Activated CD4-positive, alpha-beta memory T cell treated with anti-CD3 and anti-CD28 coated beads for 36 hours (primary cell): ENCODE measurements at regions of chr7 and their contacts with region 1.

Region 1: GRCh38 chr7:8125680-8126444 is 136.1 kb downstream of the ICA1 start:
- DNase-seq: peak; percentile 89
- H3K4me3 Mint-ChIP-seq: peak overlapping the region; percentile 66
- H3K27ac Mint-ChIP-seq: peak overlapping the region; percentile 92
- H3K4me1 Mint-ChIP-seq: peaks cover 78% of the 10 kb centered on the region
- H3K27me3 Mint-ChIP-seq: no peaks in the 10 kb centered on the region

Region 2: DNA sequence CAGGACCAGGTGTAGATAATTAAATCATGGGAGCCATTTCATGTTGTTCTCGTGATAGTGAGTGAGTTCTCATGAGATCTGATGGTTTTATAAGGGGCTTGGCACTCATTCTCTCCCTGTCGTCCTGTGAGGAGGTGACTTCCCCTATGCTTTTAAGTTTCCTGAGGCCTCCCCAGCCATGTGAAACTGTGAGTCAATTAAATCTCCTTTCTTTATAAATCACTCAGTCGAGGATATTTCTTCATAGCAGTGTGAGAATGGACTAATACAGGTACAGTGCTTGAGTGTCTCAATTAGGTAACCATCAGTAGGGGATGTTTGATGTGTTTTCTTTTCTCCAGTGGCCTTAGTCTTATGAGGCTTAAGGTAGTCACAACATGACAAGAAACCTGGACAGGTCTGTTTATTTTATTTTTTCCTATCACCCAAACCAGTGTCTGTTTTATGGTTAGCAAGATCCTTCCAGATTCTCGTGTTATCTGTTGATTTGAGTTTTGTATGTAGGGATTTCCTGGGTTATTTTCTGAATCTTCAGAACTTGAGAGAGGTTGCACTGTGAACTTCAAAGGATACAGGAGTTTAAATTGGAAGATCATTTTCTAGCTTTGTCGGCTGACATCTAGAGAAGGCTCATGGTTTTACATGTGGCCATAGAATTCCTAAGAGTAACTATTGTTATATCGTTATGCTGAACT is 453.2 kb before region 1 on chr7:
- CTCF ChIA-PET with region 1: no interaction called
- POLR2A ChIA-PET with region 1: no interaction called
- intact Hi-C with region 1: loop called (anchors 5 kb)
- DNase-seq: peak; percentile 49
- H3K4me3 Mint-ChIP-seq: peak overlapping the region; percentile 11
- H3K27ac Mint-ChIP-seq: peak overlapping the region; percentile 67
- H3K4me1 Mint-ChIP-seq: peaks cover 39% of the 10 kb centered on the region
- H3K27me3 Mint-ChIP-seq: no peaks in the 10 kb centered on the region

Region 3: GRCh38 chr7:7772397-7772821 is 353.5 kb before region 1 on chr7:
- CTCF ChIA-PET with region 1: no interaction called
- POLR2A ChIA-PET with region 1: no interaction called
- intact Hi-C with region 1: loop called (anchors 2 kb)
- DNase-seq: peak; percentile 41
- H3K4me3 Mint-ChIP-seq: no peak overlapping the region
- H3K27ac Mint-ChIP-seq: no peak overlapping the region
- H3K4me1 Mint-ChIP-seq: peaks cover 19% of the 10 kb centered on the region
- H3K27me3 Mint-ChIP-seq: no peaks in the 10 kb centered on the region

Region 4: DNA sequence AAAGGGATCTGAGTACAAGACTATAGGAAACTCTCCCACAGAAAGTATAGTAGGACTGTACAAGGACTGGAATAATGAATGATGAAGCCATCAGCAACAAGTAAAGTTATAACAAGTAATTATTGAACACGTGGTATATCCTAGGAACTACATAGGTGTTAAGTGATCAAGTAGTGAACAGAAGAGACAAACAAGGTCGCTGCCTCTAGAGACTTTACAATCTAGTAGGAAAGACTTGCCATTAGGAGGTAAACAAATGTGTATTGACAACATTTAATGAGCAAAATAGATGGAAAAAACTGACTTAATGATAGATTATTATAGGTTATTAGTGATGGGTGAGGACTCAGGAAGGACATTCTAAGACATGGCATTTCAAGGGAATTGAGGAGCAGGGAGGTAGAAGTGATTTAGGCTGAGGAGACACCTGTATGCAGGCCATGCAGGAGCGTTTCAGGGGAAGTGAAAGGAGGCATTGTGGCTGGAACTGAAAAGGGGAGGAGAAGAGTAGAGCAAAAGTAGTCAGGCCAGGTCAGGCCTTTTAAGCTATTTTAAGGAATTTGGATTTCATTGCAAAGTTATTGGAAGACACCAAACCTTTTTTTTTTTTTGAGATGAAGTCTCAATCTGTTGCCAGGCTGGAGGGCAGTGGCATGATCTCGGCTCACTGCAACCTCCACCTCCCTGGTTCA is 165.7 kb before region 1 on chr7:
- CTCF ChIA-PET with region 1: no interaction called
- POLR2A ChIA-PET with region 1: no interaction called
- intact Hi-C with region 1: no loop called
- DNase-seq: no peak
- H3K4me3 Mint-ChIP-seq: no peak overlapping the region
- H3K27ac Mint-ChIP-seq: no peak overlapping the region
- H3K4me1 Mint-ChIP-seq: peaks cover under 1% of the 10 kb centered on the region
- H3K27me3 Mint-ChIP-seq: no peaks in the 10 kb centered on the region

Region 5: DNA sequence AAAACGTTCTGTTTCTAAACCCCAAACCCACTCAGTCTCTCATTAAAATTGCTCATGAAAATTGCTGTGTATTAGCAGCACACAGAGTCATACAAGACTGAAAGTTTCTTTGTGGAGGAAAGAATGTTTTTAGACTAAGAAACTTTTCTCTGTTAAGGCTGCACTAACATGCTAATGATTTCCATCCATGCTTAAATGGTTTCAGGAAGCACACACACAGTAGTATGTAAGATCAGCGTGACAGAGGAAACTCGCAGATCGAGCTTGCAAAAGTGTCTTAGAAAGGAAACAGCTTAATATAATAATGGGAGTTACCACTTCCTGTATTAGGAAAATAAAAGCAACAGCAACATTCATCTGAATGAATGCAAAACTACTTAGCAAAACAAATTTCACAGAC is 23.4 kb after region 1 on chr7:
- CTCF ChIA-PET with region 1: no interaction called
- POLR2A ChIA-PET with region 1: no interaction called
- intact Hi-C with region 1: no loop called
- DNase-seq: no peak
- H3K4me3 Mint-ChIP-seq: peak overlapping the region; percentile 39
- H3K27ac Mint-ChIP-seq: peak overlapping the region; percentile 30
- H3K4me1 Mint-ChIP-seq: peaks cover 42% of the 10 kb centered on the region
- H3K27me3 Mint-ChIP-seq: no peaks in the 10 kb centered on the region

Region 6: GRCh38 chr7:8226501-8226900 is 100.6 kb after region 1 on chr7:
- CTCF ChIA-PET with region 1: no interaction called
- POLR2A ChIA-PET with region 1: no interaction called
- intact Hi-C with region 1: no loop called
- DNase-seq: no peak
- H3K4me3 Mint-ChIP-seq: no peak overlapping the region
- H3K27ac Mint-ChIP-seq: no peak overlapping the region
- H3K4me1 Mint-ChIP-seq: no peaks in the 10 kb centered on the region
- H3K27me3 Mint-ChIP-seq: peaks cover 12% of the 10 kb centered on the region